Mammary epithelial cell (primary cell): ENCODE measurements at regions of chr7 and their contacts with region 1.

Region 1: GRCh38 chr7:86949052-86949778 is 110.2 kb downstream of the ELAPOR2 start:
- DNase-seq: no peak
- H3K4me3 ChIP-seq: no peak overlapping the region
- H3K27ac ChIP-seq: no peak overlapping the region
- H3K4me1 ChIP-seq: no peaks in the 10 kb centered on the region
- H3K27me3 ChIP-seq: no peaks in the 10 kb centered on the region
- CTCF ChIP-seq: no peak

Region 2: GRCh38 chr7:86914551-86914950 is 34.7 kb before region 1 on chr7:
- CTCF ChIA-PET with region 1: no interaction called
- dilution Hi-C with region 1: loop called (anchors 5 kb)
- in situ Hi-C with region 1: no loop called
- intact Hi-C with region 1: no loop called
- DNase-seq: no peak
- H3K4me3 ChIP-seq: no peak overlapping the region
- H3K27ac ChIP-seq: no peak overlapping the region
- H3K4me1 ChIP-seq: no peaks in the 10 kb centered on the region
- H3K27me3 ChIP-seq: peaks cover 2% of the 10 kb centered on the region
- CTCF ChIP-seq: peak; percentile 30 to 51

Region 3: DNA sequence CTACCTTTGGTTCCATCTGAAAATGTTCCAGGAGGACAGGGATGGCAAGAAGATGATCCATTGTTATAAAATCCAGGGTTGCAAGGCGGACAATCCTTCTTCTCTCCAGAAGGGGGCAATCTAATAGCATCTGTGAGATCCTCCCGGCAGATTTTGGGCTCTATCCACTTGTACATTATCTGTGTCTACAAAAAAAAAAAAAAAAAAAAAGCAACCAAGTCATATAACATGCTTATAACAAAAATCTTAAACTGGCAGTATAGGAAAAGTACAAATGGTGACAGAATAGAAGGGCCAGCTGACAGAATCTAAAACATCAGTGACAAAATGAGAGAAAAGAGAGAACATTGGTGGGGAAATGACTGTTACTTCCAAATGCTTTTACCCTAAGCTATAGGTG is 22.5 kb before region 1 on chr7:
- CTCF ChIA-PET with region 1: interaction called, 16 read pairs
- dilution Hi-C with region 1: no loop called
- in situ Hi-C with region 1: no loop called
- intact Hi-C with region 1: no loop called
- DNase-seq: peak; percentile 24
- H3K4me3 ChIP-seq: no peak overlapping the region
- H3K27ac ChIP-seq: no peak overlapping the region
- H3K4me1 ChIP-seq: no peaks in the 10 kb centered on the region
- H3K27me3 ChIP-seq: no peaks in the 10 kb centered on the region
- CTCF ChIP-seq: peak; percentile 63 to 78